ENCODE measurements at regions of chr9 and their contacts with region 1.

Region 1: DNA sequence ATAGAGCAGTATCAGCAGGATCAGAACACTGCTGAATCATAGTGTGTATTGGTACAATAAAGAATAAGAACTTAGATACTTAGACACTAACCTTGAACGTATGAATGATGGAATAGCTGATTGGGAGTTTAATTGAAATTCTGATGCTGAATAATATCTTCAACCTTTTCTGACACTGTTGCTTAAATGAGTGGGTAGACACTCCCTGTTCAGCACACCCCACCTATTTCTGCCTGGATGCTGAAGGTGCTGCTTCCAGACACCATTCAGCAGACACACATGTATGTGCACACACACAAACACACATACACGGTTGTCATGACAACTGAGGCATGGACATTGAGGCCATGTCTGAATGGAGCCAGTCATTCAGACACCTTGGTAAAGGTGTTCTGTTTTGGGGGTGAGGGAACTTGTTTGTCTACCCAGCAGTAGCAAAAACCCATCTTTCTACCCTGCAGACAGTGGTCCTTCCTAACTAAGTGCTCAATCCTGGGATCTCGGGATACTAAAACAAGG is 54.3 kb downstream of the TMEM215 start:
- DNase-seq: no peak

Region 2: DNA sequence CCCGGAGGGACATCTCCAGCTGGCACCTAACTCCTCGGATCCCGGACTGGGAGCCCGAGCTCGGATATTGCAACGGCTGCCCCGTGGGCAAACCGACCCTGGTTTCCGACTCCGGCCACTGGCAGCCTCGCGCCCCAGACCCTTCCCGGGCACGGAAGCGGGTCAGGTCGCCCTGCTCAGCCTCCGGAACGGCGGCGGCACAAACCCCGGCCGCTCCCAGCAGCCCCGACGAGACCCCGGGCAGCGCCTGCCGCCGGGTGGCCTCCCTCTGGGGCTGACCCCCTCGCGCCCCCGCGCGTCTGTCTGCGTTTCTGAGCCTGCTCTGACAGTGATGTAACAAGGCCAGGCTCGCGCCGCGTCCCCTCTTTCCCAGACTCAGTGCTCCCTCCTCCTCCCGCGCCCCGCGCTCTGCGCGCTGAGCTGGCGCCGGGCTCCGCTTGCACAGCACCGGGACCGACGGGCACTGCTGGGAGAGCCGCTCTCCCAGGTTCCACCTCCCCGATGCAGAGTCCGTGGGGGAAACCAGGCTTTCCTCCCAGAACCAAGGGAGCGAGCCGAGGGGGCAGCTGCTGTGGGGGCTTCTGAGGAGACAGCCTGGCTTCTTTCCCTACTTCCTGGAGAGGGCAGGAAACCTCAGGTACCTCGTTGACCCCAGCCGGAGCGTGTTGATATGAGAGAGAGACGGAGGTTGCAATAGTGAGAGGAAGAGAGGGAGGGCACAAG is 54.3 kb before region 1 on chr9 and contains the start of gene TMEM215:
- intact Hi-C with region 1: no loop called
- DNase-seq: no peak
- total RNA-seq, gene TMEM215: not detected

Region 3: DNA sequence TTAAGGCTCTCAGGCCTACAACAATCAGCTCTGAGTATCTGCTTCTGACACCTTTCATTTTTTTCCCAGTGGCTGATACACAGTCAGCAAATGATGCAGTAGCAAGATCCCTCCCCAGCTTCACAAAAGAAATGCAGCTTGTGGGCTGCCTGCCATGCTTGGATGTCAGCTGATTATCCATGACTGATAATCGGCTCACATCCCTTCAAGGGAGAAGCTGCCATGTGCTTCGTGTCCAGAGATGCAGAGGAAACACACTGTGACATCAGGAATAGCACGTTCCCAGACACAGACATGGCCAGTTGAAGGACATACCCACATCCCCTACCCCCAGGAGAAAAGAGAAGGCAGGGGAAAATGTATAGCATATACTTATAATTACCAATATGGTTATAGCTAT is 26.4 kb before region 1 on chr9:
- intact Hi-C with region 1: loop called in 1 of 2 experiments (anchors 1 kb)
- DNase-seq: no peak

Measured in posterior vena cava (tissue), 2 donors.